ENCODE measurements at regions of chr19 and their contacts with region 1.

Region 1: GRCh38 chr19:53867225-53868090 is at the start of gene MYADM:
- DNase-seq: peak; percentile 99 to 100
- ATAC-seq: peak; percentile 92
- H3K4me3 ChIP-seq: peak within 1 kb of the TSS; percentile 91 to 99
- H3K27ac ChIP-seq: peak within 1 kb of the TSS; percentile 94 to 98
- H3K4me1 ChIP-seq: no peaks in the 10 kb centered on the region
- H3K27me3 ChIP-seq: no peaks in the 10 kb centered on the region
- total RNA-seq, gene MYADM: 234 to 377 TPM

Region 2: GRCh38 chr19:53958168-53958571 is 90.7 kb after region 1 on chr19:
- intact Hi-C with region 1: no loop called
- DNase-seq: no peak
- ATAC-seq: no peak
- H3K4me3 ChIP-seq: no peak overlapping the region
- H3K27ac ChIP-seq: no peak overlapping the region
- H3K4me1 ChIP-seq: no peaks in the 10 kb centered on the region
- H3K27me3 ChIP-seq: peaks cover 0 to 3% of the 10 kb centered on the region in 2 donors

Region 3: DNA sequence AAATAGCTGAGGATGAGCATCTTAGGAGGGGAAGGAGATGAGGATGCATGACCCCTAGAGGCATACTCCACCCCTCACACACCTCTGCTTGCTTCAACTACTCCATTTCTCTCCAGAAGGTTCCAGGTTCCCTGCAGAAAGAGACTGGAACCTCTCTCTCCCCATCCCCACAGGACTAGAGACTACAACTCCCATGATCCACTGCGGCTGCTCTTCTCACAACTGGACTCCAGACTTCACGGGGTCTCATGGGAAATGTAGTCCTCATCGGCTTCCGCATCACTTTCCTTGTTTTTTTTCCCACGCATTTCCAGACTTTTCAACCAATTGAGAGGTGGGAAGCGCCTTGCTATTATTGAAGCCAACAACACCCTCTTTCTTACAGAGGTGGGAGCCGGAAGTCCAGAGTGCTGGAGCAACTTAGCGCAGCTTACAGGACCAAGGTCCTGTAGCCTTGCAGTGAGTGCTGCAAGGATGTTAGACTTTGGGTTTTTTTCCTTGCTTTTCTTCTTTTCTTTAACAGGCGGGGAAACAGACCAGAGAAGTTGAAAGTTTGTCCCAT is 110.1 kb after region 1 on chr19:
- intact Hi-C with region 1: no loop called
- DNase-seq: peak; percentile 85
- ATAC-seq: peak; percentile 83
- H3K4me3 ChIP-seq: peak overlapping the region; percentile 4 to 52
- H3K27ac ChIP-seq: no peak overlapping the region
- H3K4me1 ChIP-seq: no peaks in the 10 kb centered on the region
- H3K27me3 ChIP-seq: no peaks in the 10 kb centered on the region

Region 4: DNA sequence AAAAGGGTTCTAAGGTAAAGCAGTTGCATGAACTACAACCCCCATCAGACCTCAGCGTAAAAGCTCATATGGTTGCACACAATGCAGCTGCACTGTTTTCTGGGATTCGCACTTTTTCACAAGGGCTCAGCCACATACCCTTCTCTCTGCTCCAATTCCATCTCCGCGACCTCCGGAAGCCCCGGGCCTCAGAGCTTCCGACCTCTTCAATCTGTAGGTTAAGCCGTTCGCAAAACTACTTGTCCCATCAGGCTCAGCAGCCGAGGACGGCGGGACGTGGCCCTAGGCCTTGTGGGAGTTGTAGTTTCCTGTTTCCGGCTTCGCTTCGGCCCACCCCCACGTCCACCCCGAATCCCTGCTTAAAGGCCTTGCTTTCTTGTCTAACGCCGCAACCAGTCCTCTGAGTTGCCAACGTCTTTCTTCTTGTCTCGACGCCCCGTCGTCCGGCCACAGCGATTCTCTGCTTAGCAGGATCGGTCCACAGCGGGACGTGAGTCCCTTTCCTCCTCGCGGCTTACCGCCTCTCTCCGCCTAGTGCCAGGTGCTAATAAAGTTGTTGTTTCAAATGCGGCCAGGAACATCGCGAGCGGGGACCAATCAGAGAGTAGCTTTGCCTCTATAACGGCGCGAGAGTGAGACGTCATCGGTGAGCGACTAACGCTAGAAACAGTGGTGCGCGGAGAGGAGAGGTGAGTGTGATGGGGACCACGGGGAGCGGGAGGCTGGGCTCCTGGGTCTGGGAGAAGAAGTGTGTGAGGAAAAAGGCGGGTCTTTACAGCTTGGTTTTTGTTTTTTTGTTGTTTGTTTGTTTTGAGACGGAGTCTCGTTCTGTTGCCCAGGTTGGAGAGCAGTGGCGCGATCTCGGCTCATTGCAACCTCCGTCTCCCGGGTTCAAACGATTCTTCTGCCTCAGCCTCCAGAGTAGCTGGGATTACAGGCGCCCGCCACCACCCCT is 247.9 kb after region 1 on chr19 and contains the starts of genes PRPF31 and TFPT:
- intact Hi-C with region 1: loop called in 1 of 2 experiments (anchors 10 kb)
- DNase-seq: peak; percentile 98
- ATAC-seq: peak; percentile 97
- H3K4me3 ChIP-seq: peak within 1 kb of the TSS; percentile 41 to 59
- H3K27ac ChIP-seq: peak within 1 kb of the TSS in 1 of 2 donors; percentile 51
- H3K4me1 ChIP-seq: no peaks in the 10 kb centered on the region
- H3K27me3 ChIP-seq: no peaks in the 10 kb centered on the region
- total RNA-seq, gene PRPF31: 41.5 to 50.4 TPM
- total RNA-seq, gene TFPT: 12.9 to 17.3 TPM

Region 5: GRCh38 chr19:54189735-54190502 is 322.5 kb after region 1 on chr19:
- intact Hi-C with region 1: loop called (anchors 5 to 10 kb)
- DNase-seq: peak; percentile 100
- ATAC-seq: peak; percentile 91
- H3K4me3 ChIP-seq: peak overlapping the region in 1 of 2 donors; percentile 20
- H3K27ac ChIP-seq: peak overlapping the region; percentile 47 to 94
- H3K4me1 ChIP-seq: no peaks in the 10 kb centered on the region
- H3K27me3 ChIP-seq: no peaks in the 10 kb centered on the region

Region 6: GRCh38 chr19:54448774-54449700 is 581.6 kb after region 1 on chr19 and contains the start of gene LENG8:
- intact Hi-C with region 1: loop called in 1 of 2 experiments (anchors 10 kb)
- DNase-seq: peak; percentile 99
- ATAC-seq: peak; percentile 98
- H3K4me3 ChIP-seq: peak within 1 kb of the TSS; percentile 70 to 92
- H3K27ac ChIP-seq: peak within 1 kb of the TSS; percentile 25 to 95
- H3K4me1 ChIP-seq: no peaks in the 10 kb centered on the region
- H3K27me3 ChIP-seq: no peaks in the 10 kb centered on the region
- total RNA-seq, gene LENG8: 166 to 274 TPM

Region 7: GRCh38 chr19:55117636-55118391 is 1250.4 kb after region 1 on chr19 and contains the start of gene PPP1R12C:
- intact Hi-C with region 1: loop called in 1 of 2 experiments (anchors 10 kb)
- DNase-seq: peak; percentile 99 to 100
- ATAC-seq: peak; percentile 94
- H3K4me3 ChIP-seq: peak within 1 kb of the TSS; percentile 51 to 59
- H3K27ac ChIP-seq: peak within 1 kb of the TSS; percentile 71 to 97
- H3K4me1 ChIP-seq: no peaks in the 10 kb centered on the region
- H3K27me3 ChIP-seq: no peaks in the 10 kb centered on the region
- total RNA-seq, gene PPP1R12C: 134 to 218 TPM